ENCODE measurements at regions of chr17 and their contacts with region 1.

Region 1: DNA sequence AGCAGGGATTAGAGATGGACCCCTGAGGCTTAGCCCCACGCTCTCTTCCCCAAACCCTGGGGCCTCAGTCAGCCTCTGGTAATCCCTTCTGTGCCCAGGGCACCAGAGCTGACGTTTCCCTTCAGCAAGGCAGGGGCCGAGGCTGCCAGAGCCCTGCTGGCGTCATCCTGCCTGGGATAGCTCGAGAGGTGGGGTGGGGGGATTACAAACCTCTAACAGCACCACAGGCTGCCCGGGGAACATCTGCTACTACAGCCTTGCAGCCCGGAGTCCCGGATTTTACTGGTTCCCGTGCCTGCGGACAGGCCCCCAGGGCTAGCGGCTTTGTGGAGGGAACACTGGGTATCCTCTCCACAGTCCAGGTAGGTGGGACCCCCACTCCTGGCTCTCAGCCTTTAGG is at the start of gene AANAT:
- DNase-seq: no peak
- H3K4me3 ChIP-seq: no peak within 1 kb of the TSS
- H3K27ac ChIP-seq: no peak within 1 kb of the TSS
- H3K4me1 ChIP-seq: peaks cover 15% of the 10 kb centered on the region
- H3K27me3 ChIP-seq: no peaks in the 10 kb centered on the region
- CTCF ChIP-seq: no peak
- total RNA-seq, gene AANAT: not detected

Region 2: DNA sequence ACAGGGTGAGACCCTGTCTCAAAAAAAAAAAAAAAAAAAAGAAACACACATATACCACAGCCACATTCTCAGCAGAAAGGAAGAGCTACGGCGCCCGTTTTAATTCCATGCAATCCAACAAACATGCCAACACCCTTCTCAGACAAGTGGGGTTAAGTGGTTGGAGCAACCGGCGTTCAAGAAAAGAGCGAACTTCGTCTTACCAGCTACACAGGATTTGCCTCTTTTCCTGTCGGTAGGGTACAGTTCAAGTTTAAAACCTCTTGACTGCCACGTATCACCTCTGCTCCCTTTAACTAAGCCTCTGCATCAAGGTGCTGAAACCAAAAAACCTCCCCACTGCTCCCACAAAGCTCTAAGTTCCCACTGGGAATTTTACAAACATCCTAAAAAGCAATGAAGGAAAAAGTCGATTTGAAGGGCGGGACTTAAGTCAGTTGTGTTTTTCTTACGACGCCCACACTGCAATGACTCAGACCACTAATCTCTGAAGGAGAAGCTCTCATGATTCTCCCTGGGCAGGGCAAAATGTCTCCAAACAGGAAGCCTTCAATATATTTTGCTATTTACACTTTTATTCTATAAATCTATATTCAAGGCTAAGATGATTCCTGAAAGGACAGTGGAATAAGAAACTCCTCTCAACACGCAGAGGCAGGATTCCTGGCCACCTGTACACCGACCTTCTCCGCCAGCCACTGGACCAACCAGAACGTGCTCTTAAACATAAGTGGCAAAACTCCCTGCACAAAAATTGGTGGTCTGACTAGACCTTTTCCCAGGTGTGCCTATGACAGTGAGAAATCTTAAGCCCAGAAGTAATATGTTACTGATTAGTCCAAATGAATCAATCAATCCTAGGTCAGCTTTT is 413.9 kb before region 1 on chr17:
- intact Hi-C with region 1: no loop called
- DNase-seq: no peak
- H3K4me3 ChIP-seq: no peak overlapping the region
- H3K27ac ChIP-seq: no peak overlapping the region
- H3K4me1 ChIP-seq: peaks cover 7% of the 10 kb centered on the region
- H3K27me3 ChIP-seq: no peaks in the 10 kb centered on the region
- CTCF ChIP-seq: no peak

Region 3: DNA sequence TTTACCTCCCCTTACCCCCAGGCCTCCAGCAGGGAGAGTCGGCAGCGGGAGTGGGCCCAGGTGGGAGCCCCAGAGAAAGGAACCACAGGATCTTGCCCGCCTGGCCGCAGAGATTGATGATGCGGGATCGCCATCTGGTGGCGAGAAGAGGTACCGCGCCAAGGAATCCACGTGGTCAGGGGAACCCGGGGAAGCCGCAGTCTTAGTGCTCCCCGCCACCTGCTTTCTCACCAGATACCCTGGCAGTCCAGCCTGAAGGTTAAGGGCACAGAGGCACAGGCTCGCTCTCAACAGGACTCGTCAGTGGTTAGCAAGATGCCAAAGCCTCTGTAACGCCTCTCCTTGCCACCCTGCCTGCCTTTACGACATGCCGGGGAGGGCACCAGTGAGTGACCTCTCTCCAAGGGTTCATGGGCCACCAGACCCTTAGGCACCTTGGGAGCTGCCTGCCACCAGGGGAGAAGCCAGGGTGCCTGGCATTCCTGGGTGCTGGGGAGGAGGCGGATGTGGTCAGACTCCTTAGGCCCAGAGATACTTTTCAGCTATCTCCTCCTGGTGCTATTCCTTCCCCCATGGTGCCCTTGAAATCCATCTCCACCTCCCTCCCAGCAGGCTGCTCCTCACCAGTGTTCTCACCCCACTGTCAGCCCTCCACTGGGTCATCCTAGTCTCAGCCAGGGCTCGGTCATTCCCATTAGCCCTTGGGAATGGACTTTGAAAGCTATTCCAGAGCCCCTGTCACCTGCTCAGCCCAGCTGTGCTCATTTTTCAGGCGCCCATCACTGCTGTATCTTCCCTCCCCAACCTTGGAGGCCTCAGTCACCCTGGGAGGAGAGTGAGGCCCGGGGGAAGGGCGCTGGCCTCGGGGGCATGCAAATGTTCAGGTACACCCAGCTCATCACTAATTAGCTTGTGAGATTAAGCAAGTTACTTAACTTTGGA is 39.3 kb after region 1 on chr17:
- intact Hi-C with region 1: loop called (anchors 2 kb)
- DNase-seq: peak; percentile 80
- H3K4me3 ChIP-seq: no peak overlapping the region
- H3K27ac ChIP-seq: no peak overlapping the region
- H3K4me1 ChIP-seq: peaks cover 16% of the 10 kb centered on the region
- H3K27me3 ChIP-seq: peaks cover 15% of the 10 kb centered on the region
- CTCF ChIP-seq: peak; percentile 94